Mammary epithelial cell (primary cell): ENCODE measurements at regions of chr13 and their contacts with region 1.

Region 1: GRCh38 chr13:77751513-77752456 is 54.3 kb downstream of the SLAIN1 start:
- DNase-seq: peak; percentile 21
- H3K4me3 ChIP-seq: no peak overlapping the region
- H3K27ac ChIP-seq: no peak overlapping the region
- H3K4me1 ChIP-seq: no peaks in the 10 kb centered on the region
- H3K27me3 ChIP-seq: no peaks in the 10 kb centered on the region
- CTCF ChIP-seq: peak; percentile 71 to 81

Region 2: DNA sequence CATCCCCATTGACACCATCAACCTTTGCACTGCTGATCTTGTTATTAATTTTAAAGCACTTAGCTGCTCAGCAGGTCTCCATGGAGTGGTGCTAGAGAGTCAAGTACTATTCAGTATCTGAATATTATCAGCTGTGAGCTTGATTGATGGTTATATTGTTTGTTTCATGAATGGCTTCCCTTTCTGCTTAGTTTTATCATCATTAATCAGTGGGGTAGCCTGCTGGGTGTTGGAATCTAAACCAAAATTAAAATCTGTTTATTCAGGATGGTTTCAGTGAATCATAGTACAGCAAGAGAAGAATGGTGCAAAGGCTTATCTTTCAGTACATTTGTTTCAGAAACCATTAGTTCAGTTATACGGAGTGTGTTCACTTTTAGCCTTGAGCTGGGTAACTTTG is 258.8 kb before region 1 on chr13:
- CTCF ChIA-PET with region 1: no interaction called
- dilution Hi-C with region 1: no loop called
- in situ Hi-C with region 1: no loop called
- intact Hi-C with region 1: loop called (anchors 2 kb)
- DNase-seq: peak; percentile 16
- H3K4me3 ChIP-seq: no peak overlapping the region
- H3K27ac ChIP-seq: no peak overlapping the region
- H3K4me1 ChIP-seq: no peaks in the 10 kb centered on the region
- H3K27me3 ChIP-seq: peaks cover 21% of the 10 kb centered on the region
- CTCF ChIP-seq: peak; percentile 78 to 79

Region 3: DNA sequence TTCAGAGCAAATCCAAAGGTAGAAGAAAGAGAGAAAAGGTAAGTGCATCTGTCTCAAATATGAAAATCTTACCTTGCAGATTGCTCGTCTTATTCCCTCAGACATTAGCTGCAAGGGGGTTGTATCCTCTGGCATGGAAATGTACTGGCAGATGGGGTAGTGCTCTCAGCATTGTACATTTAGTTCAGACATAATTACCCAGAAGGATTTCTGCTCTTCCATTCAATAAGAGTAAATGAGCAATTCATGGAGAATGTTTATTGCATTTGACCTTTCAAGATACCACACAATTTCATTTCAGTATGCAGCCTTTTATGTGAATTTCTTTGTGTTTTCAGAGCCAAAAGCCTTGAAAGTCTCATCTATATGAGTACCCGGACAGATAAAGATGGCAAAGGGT is 152.4 kb before region 1 on chr13:
- CTCF ChIA-PET with region 1: no interaction called
- dilution Hi-C with region 1: no loop called
- in situ Hi-C with region 1: loop called in 1 of 2 experiments (anchors 10 kb)
- intact Hi-C with region 1: no loop called
- DNase-seq: no peak
- H3K4me3 ChIP-seq: no peak overlapping the region
- H3K27ac ChIP-seq: no peak overlapping the region
- H3K4me1 ChIP-seq: no peaks in the 10 kb centered on the region
- H3K27me3 ChIP-seq: peaks cover 3% of the 10 kb centered on the region
- CTCF ChIP-seq: no peak

Region 4: DNA sequence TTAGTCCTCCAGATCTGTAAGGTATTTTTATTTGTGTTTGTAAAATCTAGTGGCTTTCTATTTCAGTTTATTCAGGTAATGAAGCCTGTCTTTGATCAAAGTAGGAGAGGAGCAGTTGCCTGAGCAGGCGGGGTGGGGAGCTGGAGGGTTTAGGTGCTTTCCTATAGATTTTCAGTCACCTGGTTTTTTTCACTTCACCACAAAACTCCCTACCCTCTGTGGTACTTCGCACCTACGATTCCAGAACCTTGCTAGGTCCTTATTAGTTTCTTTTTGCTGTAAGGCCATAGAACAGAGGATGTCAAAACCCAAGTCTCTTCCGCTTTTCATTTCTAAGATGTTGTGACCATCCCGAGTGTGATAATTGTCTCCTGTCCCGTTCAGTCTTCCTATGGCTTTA is 27.7 kb before region 1 on chr13:
- CTCF ChIA-PET with region 1: no interaction called
- dilution Hi-C with region 1: no loop called
- in situ Hi-C with region 1: no loop called
- intact Hi-C with region 1: no loop called
- DNase-seq: no peak
- H3K4me3 ChIP-seq: no peak overlapping the region
- H3K27ac ChIP-seq: no peak overlapping the region
- H3K4me1 ChIP-seq: no peaks in the 10 kb centered on the region
- H3K27me3 ChIP-seq: no peaks in the 10 kb centered on the region
- CTCF ChIP-seq: no peak